ENCODE measurements at regions of chr11 and their contacts with region 1.

Region 1: DNA sequence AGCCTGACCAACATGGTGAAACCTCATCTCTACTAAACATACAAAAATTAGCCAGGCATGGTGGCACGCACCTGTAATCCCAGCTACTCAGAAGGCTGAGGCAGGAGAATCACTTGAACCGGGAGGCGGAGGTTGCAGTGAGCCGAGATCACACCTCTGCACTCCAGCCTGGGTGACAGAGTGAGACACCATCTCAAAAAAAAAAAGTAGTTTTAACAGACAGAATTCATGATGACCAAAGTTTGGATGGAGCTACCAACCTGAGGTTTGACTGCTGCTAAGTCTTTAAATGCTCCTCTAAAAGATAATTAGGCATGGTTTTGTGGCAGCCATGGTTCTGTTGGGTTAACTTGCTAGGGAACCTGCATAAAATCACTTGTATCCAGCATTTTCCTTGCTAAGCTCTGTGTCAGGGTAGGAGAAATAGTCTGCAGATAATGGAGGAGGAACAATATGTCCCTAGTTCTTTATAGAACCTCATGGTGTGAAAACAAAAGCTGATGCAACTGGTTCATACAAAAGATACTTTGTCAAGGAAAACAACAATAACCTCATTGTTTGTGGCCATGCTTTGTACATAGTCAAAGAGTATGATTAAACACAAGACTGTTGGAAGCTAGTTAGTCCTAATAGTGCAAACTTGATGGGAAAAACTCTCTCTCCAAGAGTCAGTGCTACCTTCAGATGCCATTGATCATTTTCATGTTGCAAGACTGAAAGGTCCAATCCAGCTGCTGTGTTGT is 19.9 kb upstream of the PLAAT2 start:
- DNase-seq: peak in 1 of 10 donors; percentile 5
- H3K4me3 ChIP-seq: peak overlapping the region in 4 of 59 donors; percentile 7 to 31 (median 16)
- H3K27ac ChIP-seq: peak overlapping the region; percentile 77 to 100 (median 97)
- H3K27me3 ChIP-seq: no peaks in the 10 kb centered on the region
- CTCF ChIP-seq: peak in 1 of 56 donors; percentile 9

Region 2: DNA sequence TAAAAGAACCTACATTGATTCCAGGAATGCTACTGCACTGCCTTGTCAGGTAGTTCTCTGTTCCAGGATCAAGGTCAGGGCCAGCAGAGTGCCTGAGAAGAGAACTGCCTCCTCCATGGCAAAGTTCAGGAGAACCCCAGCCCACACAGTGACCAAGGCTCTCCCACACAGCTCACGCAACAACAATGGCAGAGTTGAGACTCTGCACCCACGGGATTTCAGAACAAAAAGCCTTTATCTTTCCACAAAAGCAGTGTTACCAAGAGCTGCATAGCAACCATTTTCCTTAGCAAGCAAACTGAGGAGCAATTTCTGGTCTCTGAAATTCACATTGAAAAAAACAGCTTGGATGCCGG is 20.0 kb after region 1 on chr11:
- intact Hi-C with region 1: loop called in 1 of 2 experiments (anchors 2 kb)
- DNase-seq: peak in 8 of 10 donors; percentile 65 to 79 (median 70)
- H3K4me3 ChIP-seq: peak overlapping the region in 37 of 59 donors; percentile 1 to 53 (median 26)
- H3K27ac ChIP-seq: peak overlapping the region; percentile 81 to 100 (median 97)
- H3K27me3 ChIP-seq: no peaks in the 10 kb centered on the region
- CTCF ChIP-seq: peak in 1 of 56 donors; percentile 30

Region 3: DNA sequence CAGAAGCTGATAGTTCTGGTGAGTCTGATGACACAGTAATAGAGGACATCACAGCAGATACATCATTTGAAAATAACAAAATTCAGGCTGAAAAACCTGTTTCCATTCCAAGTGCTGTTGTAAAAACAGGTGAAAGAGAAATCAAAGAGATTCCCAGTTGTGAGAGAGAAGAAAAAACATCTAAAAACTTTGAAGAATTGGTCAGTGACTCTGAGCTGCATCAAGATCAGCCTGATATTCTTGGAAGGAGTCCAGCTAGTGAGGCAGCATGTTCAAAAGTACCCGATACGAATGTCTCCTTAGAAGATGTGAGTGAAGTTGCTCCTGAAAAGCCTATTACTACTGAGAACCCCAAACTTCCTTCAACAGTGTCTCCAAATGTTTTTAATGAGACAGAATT is 136.9 kb after region 1 on chr11:
- intact Hi-C with region 1: no loop called
- DNase-seq: no peak
- H3K4me3 ChIP-seq: peak overlapping the region in 1 of 59 donors; percentile 13
- H3K27ac ChIP-seq: peak overlapping the region in 13 of 59 donors; percentile 1 to 66 (median 26)
- H3K27me3 ChIP-seq: no peaks in the 10 kb centered on the region
- CTCF ChIP-seq: no peak